ENCODE measurements at regions of chr9 and their contacts with region 1.

Region 1: DNA sequence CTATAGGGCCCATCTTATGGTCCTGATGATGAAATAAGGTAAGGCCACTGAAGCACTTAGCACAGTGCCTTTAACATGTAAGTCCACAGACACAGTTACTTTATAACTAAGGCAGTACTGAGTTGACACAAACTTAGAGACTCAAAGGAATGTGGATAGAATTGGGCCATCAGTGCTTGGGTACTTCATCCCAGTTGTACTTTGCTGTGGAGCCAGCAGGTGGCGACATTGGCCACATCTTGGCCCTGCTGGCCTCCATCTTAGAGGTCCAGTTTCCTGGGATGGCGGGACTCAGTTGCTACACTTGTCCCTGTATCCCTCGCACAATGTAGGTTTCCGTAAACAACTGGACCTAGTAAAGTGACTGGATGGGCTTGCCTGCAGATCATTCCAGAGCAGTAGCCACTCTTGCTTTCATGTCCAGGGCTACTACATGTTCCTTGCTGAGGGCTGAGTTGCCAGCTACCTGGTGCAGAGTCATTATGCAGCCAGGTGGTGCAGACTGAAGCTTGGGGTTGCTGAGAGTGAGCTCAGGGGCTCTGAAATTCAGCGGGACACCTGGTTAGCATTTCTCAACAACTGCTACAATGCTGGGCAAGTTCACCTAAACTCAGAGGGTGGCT is 10.6 kb downstream of the MTAP start:
- DNase-seq: peak; percentile 11 to 69 (median 50)
- ATAC-seq: peak; percentile 82
- H3K4me3 ChIP-seq: no peak overlapping the region
- H3K4me3 Mint-ChIP-seq: no peak overlapping the region
- H3K27ac ChIP-seq: no peak overlapping the region
- H3K27ac Mint-ChIP-seq: peak overlapping the region in 4 of 9 donors; percentile 6 to 81 (median 64)
- H3K4me1 ChIP-seq: peaks cover 7 to 12% of the 10 kb centered on the region in 2 donors
- H3K4me1 Mint-ChIP-seq: peaks cover 6 to 40% (median 17%) of the 10 kb centered on the region in 7 donors
- H3K27me3 ChIP-seq: no peaks in the 10 kb centered on the region
- H3K27me3 Mint-ChIP-seq: no peaks in the 10 kb centered on the region

Region 2: GRCh38 chr9:21802195-21803000 is 10.7 kb before region 1 on chr9 and contains the start of gene MTAP:
- CTCF ChIA-PET with region 1: interaction called, 5 read pairs
- POLR2A ChIA-PET with region 1: interaction called, 7 read pairs
- intact Hi-C with region 1: loop called in 1 of 2 experiments (anchors 1 kb)
- DNase-seq: peak in 7 of 9 donors; percentile 46 to 81 (median 72)
- ATAC-seq: peak; percentile 88
- H3K4me3 ChIP-seq: peak within 1 kb of the TSS; percentile 92
- H3K4me3 Mint-ChIP-seq: peak within 1 kb of the TSS; percentile 96 to 100 (median 99)
- H3K27ac ChIP-seq: peak within 1 kb of the TSS; percentile 69
- H3K27ac Mint-ChIP-seq: peak within 1 kb of the TSS; percentile 92 to 99 (median 96)
- H3K4me1 ChIP-seq: peaks cover 10 to 25% of the 10 kb centered on the region in 2 donors
- H3K4me1 Mint-ChIP-seq: peaks cover 24 to 52% (median 40%) of the 10 kb centered on the region in 7 donors
- H3K27me3 ChIP-seq: peaks cover 0 to 4% of the 10 kb centered on the region in 2 donors
- H3K27me3 Mint-ChIP-seq: peaks cover 0 to 46% (median 8%) of the 10 kb centered on the region in 5 donors
- total RNA-seq, gene MTAP: 29.0 to 50.7 (median 43.2) TPM

Region 3: DNA sequence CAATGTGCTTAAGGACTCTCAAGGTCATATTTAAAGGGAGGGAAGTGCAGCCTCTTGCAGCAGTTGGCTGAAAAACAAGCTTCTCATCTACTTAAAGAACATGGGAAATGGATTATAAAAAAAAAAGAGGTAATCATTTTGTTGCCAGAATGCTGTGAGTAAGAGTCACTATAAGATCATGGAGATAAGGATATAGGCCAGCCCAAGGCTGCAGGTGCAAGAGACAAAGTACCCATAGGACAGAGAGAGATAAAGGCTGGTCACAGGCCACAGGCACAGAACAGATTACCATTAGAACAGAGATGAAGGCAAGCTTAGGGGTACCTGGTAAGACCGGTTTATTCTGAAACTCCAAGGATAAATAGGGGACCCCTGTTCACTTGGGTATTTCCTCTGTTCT is 110.6 kb after region 1 on chr9:
- CTCF ChIA-PET with region 1: no interaction called
- POLR2A ChIA-PET with region 1: no interaction called
- intact Hi-C with region 1: no loop called
- DNase-seq: no peak
- ATAC-seq: no peak
- H3K4me3 ChIP-seq: no peak overlapping the region
- H3K4me3 Mint-ChIP-seq: no peak overlapping the region
- H3K27ac ChIP-seq: no peak overlapping the region
- H3K27ac Mint-ChIP-seq: no peak overlapping the region
- H3K4me1 ChIP-seq: peaks cover 13 to 14% of the 10 kb centered on the region in 2 donors
- H3K4me1 Mint-ChIP-seq: peaks cover 12 to 37% (median 26%) of the 10 kb centered on the region in 7 donors
- H3K27me3 ChIP-seq: no peaks in the 10 kb centered on the region
- H3K27me3 Mint-ChIP-seq: no peaks in the 10 kb centered on the region

Region 4: GRCh38 chr9:21965401-21965951 is 152.4 kb after region 1 on chr9:
- CTCF ChIA-PET with region 1: interaction called, 3 read pairs
- POLR2A ChIA-PET with region 1: no interaction called
- intact Hi-C with region 1: loop called in 1 of 2 experiments (anchors 1 kb)
- DNase-seq: peak in 1 of 9 donors; percentile 53
- ATAC-seq: peak; percentile 75
- H3K4me3 ChIP-seq: peak overlapping the region; percentile 33
- H3K4me3 Mint-ChIP-seq: peak overlapping the region in 9 of 10 donors; percentile 1 to 81 (median 57)
- H3K27ac ChIP-seq: no peak overlapping the region
- H3K27ac Mint-ChIP-seq: peak overlapping the region in 5 of 9 donors; percentile 1 to 78 (median 61)
- H3K4me1 ChIP-seq: peaks cover 10 to 18% of the 10 kb centered on the region in 2 donors
- H3K4me1 Mint-ChIP-seq: peaks cover 9 to 35% (median 25%) of the 10 kb centered on the region in 7 donors
- H3K27me3 ChIP-seq: peaks cover 56 to 66% of the 10 kb centered on the region in 2 donors
- H3K27me3 Mint-ChIP-seq: peaks cover 89 to 94% (median 94%) of the 10 kb centered on the region in 5 donors

Region 5: DNA sequence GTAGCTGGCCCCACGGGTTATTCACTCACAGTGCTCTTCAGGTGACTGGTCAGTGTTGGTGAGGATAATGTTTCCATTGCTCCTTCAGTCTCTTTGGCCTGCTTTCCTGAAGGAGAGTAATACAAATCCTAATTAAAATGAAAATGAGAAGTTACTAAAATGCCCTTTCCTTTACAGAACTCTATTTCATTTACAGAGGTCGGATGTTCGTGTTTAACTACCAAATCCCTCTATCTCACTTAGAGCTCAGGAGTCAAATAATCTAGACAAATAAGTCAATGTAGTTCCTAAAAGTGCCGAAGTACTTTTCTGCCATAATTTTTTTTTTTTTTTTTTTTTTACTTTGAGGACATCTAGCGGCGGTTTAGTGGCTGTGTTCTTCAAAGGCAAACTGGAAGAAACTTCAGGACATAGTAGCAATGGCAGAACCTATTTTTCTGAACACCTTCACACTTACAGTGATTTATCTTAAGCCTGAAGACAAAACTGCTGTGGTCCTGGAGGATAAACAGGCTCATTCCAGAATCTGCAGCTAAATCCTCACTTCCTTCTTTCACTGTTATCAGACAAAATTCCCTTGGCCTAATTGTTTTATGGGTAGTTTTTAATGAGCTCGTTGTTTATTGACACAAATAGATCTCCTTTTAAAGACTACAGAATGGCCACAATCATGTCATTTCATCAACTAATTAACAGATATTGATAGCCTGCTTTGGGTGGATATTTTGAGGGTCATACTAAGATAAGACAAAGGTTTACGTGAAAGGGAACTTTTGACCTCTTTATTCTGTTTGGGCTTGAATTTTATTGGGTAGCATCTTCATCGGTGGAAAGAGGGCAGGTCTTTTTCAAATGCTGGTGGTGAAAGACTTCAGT is 426.0 kb after region 1 on chr9:
- CTCF ChIA-PET with region 1: interaction called, 4 read pairs
- POLR2A ChIA-PET with region 1: no interaction called
- intact Hi-C with region 1: loop called (anchors 1 kb)
- DNase-seq: peak in 1 of 9 donors; percentile 14
- ATAC-seq: no peak
- H3K4me3 ChIP-seq: no peak overlapping the region
- H3K4me3 Mint-ChIP-seq: peak overlapping the region in 1 of 10 donors; percentile 26
- H3K27ac ChIP-seq: no peak overlapping the region
- H3K27ac Mint-ChIP-seq: no peak overlapping the region
- H3K4me1 ChIP-seq: no peaks in the 10 kb centered on the region
- H3K4me1 Mint-ChIP-seq: peaks cover 0 to 35% (median 21%) of the 10 kb centered on the region in 7 donors
- H3K27me3 ChIP-seq: no peaks in the 10 kb centered on the region
- H3K27me3 Mint-ChIP-seq: peaks cover 0 to 55% (median 0%) of the 10 kb centered on the region in 5 donors

Region 6: DNA sequence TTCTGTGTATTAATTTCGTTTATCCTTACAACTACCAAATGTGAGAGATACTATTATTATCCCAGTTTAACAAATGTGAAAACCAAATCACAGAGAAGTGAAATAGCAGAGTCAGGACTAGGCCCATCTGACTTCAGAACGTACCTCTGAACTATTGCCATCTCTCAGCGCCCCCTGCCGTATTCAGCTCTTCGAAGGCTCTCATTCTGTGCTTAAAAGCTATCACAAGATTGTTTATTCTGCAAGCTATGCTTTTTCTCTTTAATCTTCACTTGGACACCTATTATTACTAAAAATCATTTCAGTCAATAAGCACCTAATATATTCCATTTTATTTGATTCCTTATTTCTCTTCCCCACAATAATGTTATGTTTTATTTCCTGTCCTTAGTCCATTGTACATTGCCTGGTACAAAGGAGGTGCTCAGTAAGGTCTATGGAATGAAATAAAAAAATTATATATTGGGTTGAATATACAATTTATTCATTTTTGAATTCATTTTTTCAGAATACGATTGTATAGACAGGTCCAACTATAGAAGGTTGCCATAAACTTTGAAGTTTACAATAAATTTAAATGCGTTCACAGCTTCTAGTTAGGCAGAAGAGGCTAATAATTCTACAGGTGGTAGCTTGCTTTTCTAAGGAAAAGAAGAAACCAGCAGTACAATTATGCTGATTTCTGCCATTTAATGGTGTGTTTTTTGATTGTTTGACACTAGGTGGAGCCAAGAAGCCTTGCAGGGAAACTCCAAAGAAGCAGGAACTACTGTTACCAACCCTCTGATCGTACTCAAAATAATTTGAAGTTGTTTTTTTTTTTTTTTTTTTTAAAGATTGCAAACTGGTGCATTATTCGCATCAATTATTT is 431.3 kb after region 1 on chr9:
- CTCF ChIA-PET with region 1: no interaction called
- POLR2A ChIA-PET with region 1: no interaction called
- intact Hi-C with region 1: loop called in 1 of 2 experiments (anchors 1 kb)
- DNase-seq: peak in 6 of 9 donors; percentile 5 to 35 (median 16)
- ATAC-seq: peak; percentile 84
- H3K4me3 ChIP-seq: no peak overlapping the region
- H3K4me3 Mint-ChIP-seq: peak overlapping the region in 6 of 10 donors; percentile 6 to 61 (median 38)
- H3K27ac ChIP-seq: no peak overlapping the region
- H3K27ac Mint-ChIP-seq: no peak overlapping the region
- H3K4me1 ChIP-seq: no peaks in the 10 kb centered on the region
- H3K4me1 Mint-ChIP-seq: peaks cover 0 to 20% (median 9%) of the 10 kb centered on the region in 7 donors
- H3K27me3 ChIP-seq: no peaks in the 10 kb centered on the region
- H3K27me3 Mint-ChIP-seq: peaks cover 5 to 55% (median 14%) of the 10 kb centered on the region in 5 donors

Region 7: GRCh38 chr9:22452415-22453010 is 639.5 kb after region 1 on chr9:
- CTCF ChIA-PET with region 1: interaction called, 19 read pairs
- POLR2A ChIA-PET with region 1: no interaction called
- intact Hi-C with region 1: loop called in 1 of 2 experiments (anchors 1 kb)
- DNase-seq: peak in 5 of 9 donors; percentile 8 to 31 (median 11)
- ATAC-seq: peak; percentile 70
- H3K4me3 ChIP-seq: no peak overlapping the region
- H3K4me3 Mint-ChIP-seq: no peak overlapping the region
- H3K27ac ChIP-seq: no peak overlapping the region
- H3K27ac Mint-ChIP-seq: no peak overlapping the region
- H3K4me1 ChIP-seq: no peaks in the 10 kb centered on the region
- H3K4me1 Mint-ChIP-seq: peaks cover 0 to 5% (median 2%) of the 10 kb centered on the region in 7 donors
- H3K27me3 ChIP-seq: peaks cover 6 to 10% of the 10 kb centered on the region in 2 donors
- H3K27me3 Mint-ChIP-seq: peaks cover 28 to 65% (median 37%) of the 10 kb centered on the region in 5 donors

Measured in naive thymus-derived CD4-positive, alpha-beta T cell (primary cell).